ENCODE measurements at regions of chr14 and their contacts with region 1.

Region 1: DNA sequence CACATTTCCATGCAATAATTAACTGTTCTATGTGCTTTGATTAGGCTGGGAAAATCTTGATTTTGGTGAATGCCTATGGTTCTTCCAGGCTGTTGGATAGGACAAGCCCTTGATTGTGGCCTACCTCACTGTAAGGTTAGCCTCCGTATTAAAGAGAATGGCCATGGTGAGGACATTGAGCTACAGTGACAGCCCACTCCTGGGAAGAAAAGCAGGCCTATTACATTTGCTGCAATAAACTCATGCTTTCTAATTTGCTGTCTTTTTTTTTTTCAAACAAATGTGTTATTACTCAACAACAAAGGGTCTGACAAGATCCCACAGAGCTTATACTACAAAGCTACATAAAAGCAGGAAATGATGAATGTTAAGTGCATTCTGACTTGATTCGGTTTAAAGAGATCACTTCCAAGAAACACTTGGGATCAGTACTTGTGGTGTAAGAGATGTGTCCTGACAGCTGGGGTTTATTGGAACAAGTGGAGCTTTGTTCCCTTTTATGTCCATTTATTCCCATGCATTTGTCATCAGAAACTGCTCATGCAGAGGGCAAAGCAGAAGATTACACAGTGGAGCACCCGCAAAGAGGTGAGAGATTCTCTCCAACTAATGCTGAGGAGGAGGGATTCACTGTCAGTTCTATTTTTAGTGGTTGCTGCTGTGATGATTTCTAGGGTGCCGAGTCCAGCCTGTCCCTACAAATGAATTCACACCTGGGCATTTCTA is 29.1 kb upstream of the KCNK10 start:
- DNase-seq: no peak
- ATAC-seq: no peak
- H3K4me3 ChIP-seq: no peak overlapping the region
- H3K27ac ChIP-seq: no peak overlapping the region
- H3K4me1 ChIP-seq: no peaks in the 10 kb centered on the region
- H3K27me3 ChIP-seq: peaks cover 0 to 2% (median 0%) of the 10 kb centered on the region in 3 donors
- CTCF ChIP-seq: no peak

Region 2: GRCh38 chr14:88340357-88340756 is 11.8 kb before region 1 on chr14:
- intact Hi-C with region 1: loop called in 1 of 2 experiments (anchors 1 kb)
- DNase-seq: no peak
- ATAC-seq: no peak
- H3K4me3 ChIP-seq: no peak overlapping the region
- H3K27ac ChIP-seq: no peak overlapping the region
- H3K4me1 ChIP-seq: no peaks in the 10 kb centered on the region
- H3K27me3 ChIP-seq: no peaks in the 10 kb centered on the region
- CTCF ChIP-seq: no peak

Measured in psoas muscle (tissue), 8 donors.